Activated CD4-positive, alpha-beta T cell treated with anti-CD3 and anti-CD28 coated beads for 36 hours (primary cell): ENCODE measurements at regions of chr7 and their contacts with region 1.

Region 1: GRCh38 chr7:50304158-50304910 is at the start of gene IKZF1:
- DNase-seq: peak; percentile 82
- ATAC-seq: peak; percentile 21
- H3K4me3 Mint-ChIP-seq: peak within 1 kb of the TSS; percentile 95
- H3K27ac Mint-ChIP-seq: peak within 1 kb of the TSS; percentile 100
- H3K4me1 Mint-ChIP-seq: peaks cover 40% of the 10 kb centered on the region
- H3K27me3 Mint-ChIP-seq: no peaks in the 10 kb centered on the region
- total RNA-seq, gene IKZF1: 245 to 260 TPM

Region 2: GRCh38 chr7:50142425-50143017 is 161.8 kb before region 1 on chr7:
- CTCF ChIA-PET with region 1: interaction called, 5 read pairs
- POLR2A ChIA-PET with region 1: no interaction called
- intact Hi-C with region 1: loop called (anchors 1 to 5 kb)
- DNase-seq: peak; percentile 51
- ATAC-seq: peak; percentile 63
- H3K4me3 Mint-ChIP-seq: peak overlapping the region; percentile 53
- H3K27ac Mint-ChIP-seq: peak overlapping the region; percentile 94
- H3K4me1 Mint-ChIP-seq: peaks cover 43% of the 10 kb centered on the region
- H3K27me3 Mint-ChIP-seq: no peaks in the 10 kb centered on the region

Region 3: GRCh38 chr7:50229964-50230363 is 74.4 kb before region 1 on chr7:
- CTCF ChIA-PET with region 1: interaction called, 19 read pairs
- POLR2A ChIA-PET with region 1: no interaction called
- intact Hi-C with region 1: loop called in 1 of 2 experiments (anchors 5 kb)
- DNase-seq: no peak
- ATAC-seq: no peak
- H3K4me3 Mint-ChIP-seq: no peak overlapping the region
- H3K27ac Mint-ChIP-seq: no peak overlapping the region
- H3K4me1 Mint-ChIP-seq: peaks cover 37% of the 10 kb centered on the region
- H3K27me3 Mint-ChIP-seq: no peaks in the 10 kb centered on the region

Region 4: DNA sequence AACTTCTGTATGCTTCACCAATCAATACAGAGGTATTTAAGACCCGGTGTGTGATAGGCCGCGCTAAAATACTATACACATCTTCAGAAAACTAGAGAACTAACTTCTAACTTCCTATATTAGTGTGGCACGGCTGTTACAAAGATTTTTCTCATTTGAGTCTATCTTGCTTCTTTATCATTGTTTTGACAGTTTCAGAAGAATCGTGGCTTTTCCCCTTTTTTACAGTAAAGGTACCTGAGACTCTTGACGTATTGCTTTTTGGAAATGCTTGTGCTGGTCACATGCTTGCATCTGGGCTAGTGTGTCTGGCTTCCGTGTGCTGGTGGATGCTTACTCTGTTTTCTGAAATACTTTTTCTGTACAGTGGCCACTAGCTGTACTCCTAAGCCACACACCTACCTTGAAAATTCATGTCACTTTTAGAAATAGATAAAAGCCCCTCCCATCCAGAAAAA is 12.9 kb after region 1 on chr7:
- CTCF ChIA-PET with region 1: interaction called, 26 read pairs
- POLR2A ChIA-PET with region 1: interaction called, 24 read pairs
- intact Hi-C with region 1: loop called (anchors 1 kb)
- DNase-seq: peak; percentile 73
- ATAC-seq: peak; percentile 82
- H3K4me3 Mint-ChIP-seq: peak overlapping the region; percentile 95
- H3K27ac Mint-ChIP-seq: peak overlapping the region; percentile 100
- H3K4me1 Mint-ChIP-seq: peaks cover 93% of the 10 kb centered on the region
- H3K27me3 Mint-ChIP-seq: no peaks in the 10 kb centered on the region

Region 5: DNA sequence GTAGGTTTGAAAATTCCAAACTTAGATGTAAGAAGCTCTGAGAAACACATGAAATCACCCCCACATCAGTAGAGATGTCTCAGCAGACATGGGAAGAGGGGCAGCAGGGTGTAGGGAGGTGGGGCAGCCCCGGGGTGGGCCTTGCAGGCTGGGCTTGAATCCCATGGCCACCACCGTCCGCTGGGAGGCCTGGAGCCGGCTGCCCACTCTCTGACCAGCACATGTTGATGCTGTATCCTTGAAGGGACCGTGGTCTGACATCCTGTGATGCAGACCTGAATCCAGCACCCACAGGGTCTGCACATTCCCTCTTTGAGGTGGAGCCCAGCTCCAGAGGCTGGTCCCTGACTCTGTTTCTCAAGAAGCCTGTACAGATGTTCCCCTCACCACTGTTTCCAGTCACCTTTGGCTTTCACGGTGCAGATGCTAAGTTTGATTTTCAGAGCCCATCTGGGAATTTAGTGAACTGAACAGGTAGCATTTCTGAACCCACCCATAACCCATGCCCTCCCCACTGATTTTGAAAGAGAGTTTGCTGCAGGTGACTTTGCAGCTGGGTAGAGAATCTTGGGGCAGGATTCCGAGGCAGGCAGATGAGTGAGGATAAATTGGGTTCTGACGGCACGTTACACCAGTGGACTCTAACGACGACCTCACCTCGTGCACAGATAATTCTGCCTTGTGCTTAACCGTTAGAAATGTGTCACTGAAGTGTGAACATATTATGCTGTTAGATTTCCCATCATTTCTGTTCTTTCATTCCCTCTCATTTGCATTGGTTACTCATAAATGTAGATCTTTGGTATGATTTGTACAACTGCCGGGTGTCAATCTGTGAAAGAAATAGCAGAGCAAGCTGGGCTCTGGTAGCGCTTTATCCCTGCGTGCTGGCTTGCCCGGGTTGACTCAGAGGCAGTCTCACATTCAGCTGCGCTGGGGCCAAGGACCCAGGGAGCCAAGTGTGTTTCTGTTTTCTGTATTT is 45.9 kb after region 1 on chr7:
- CTCF ChIA-PET with region 1: interaction called, 8 read pairs
- POLR2A ChIA-PET with region 1: interaction called, 55 read pairs
- intact Hi-C with region 1: loop called (anchors 1 to 2 kb)
- DNase-seq: peak; percentile 93
- ATAC-seq: peak; percentile 71
- H3K4me3 Mint-ChIP-seq: peak overlapping the region; percentile 61
- H3K27ac Mint-ChIP-seq: peak overlapping the region; percentile 100
- H3K4me1 Mint-ChIP-seq: peaks cover 97% of the 10 kb centered on the region
- H3K27me3 Mint-ChIP-seq: no peaks in the 10 kb centered on the region

Region 6: DNA sequence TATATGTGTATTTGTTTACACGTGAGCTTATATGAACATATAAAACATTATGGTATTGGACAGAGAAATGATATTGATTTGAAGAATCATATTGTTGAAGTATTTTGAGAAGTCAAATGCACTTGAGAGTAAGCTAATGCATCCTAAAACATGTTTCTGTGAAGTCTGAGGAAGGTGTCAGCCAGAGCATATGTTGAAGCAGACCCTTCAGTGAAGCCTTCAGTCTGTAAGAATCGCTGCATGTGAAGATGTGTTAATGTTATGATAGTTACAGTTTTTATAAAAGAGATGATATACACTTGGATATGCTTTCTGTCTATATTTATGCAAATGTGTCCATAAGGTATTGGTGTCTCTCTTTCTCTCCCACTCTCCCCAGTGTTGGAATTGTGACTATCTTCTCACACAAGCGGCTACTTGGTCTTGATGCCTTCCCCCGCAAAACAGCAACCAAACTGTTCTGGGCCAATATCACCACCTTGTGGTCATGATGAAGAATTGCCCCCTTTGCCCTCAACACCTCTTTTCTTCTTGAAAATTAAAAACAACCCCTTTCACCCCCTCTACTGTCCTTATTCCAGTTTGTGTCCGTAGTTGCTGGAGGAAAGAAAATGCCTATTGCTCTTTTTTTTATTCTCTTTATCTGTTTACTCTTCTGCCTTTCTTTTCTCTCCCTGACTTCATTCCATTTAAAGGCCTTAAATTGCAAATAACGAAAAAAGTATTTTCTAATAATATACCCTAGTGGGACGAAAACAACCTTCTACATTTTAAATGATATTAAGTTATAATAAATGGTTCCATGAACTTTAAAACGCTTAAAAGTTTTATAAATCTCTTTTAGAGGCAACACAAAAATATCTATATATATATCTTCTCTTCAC is 65.1 kb after region 1 on chr7:
- CTCF ChIA-PET with region 1: interaction called, 96 read pairs
- POLR2A ChIA-PET with region 1: interaction called, 13 read pairs
- intact Hi-C with region 1: loop called (anchors 1 to 2 kb)
- DNase-seq: peak; percentile 62
- ATAC-seq: no peak
- H3K4me3 Mint-ChIP-seq: peak overlapping the region; percentile 10
- H3K27ac Mint-ChIP-seq: peak overlapping the region; percentile 88
- H3K4me1 Mint-ChIP-seq: peaks cover 96% of the 10 kb centered on the region
- H3K27me3 Mint-ChIP-seq: no peaks in the 10 kb centered on the region

Region 7: GRCh38 chr7:51123322-51124029 is 819.1 kb after region 1 on chr7:
- CTCF ChIA-PET with region 1: no interaction called
- POLR2A ChIA-PET with region 1: no interaction called
- intact Hi-C with region 1: loop called in 1 of 2 experiments (anchors 5 kb)
- DNase-seq: peak; percentile 92
- ATAC-seq: peak; percentile 99
- H3K4me3 Mint-ChIP-seq: peak overlapping the region; percentile 10
- H3K27ac Mint-ChIP-seq: peak overlapping the region; percentile 88
- H3K4me1 Mint-ChIP-seq: peaks cover 40% of the 10 kb centered on the region
- H3K27me3 Mint-ChIP-seq: no peaks in the 10 kb centered on the region